Posterior vena cava (tissue), 2 donors: ENCODE measurements at regions of chr1 and their contacts with region 1.

Region 1: DNA sequence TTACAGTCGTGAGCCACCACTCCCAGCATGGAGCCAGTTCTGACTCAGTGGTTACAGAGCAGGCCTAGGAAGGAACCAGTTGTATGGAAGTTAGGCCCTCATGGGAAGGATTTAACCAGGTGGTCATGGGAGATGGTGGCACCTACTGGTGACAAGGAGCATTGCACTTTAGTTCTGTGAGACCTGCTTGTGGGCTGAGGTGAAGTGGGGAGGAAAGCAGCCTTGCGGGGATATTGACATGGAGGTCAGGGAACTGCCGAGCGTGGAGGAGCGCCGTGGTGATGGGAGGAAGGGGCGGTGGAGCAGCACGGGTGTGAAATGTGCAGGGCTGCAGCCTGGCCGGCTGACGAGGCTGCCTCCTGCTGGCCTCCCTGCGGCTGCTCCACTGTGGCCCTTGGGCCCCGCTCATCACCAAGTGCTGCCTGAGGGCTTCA is 100.4 kb downstream of the GALNT2 start:
- DNase-seq: no peak

Region 2: DNA sequence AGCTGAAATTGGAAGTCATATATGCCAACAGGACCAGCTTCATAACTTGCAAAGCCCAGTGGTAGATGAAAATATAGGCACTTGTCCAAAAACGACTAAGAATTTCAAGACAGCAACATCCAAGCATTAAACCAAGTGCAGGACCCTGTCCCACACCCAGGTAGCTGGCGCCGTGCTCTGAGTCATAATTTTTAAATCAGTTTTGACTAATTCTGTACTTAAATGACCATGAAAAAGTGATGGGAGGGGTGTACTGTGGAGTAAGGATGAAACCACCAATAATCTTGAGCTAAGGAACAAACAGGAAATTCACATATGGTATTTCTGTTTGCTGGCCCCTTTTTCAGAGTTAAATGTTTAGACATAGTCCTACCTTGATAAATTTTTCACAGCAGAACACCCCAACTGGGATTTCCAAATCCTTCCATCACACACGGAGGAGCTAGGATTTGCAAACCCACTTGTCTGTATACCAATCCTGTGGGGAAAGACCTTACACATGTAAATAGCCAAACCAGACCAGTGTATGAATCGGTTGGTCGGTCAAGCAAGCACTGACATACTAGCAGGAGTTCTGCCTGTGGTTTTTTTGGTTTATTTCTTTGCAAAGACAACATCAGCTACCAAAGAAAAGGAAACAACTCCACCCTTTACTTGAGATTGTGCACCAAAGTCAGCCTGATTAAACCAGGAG is 1132.2 kb before region 1 on chr1:
- intact Hi-C with region 1: loop called in 1 of 2 experiments (anchors 5 kb)
- DNase-seq: no peak

Region 3: DNA sequence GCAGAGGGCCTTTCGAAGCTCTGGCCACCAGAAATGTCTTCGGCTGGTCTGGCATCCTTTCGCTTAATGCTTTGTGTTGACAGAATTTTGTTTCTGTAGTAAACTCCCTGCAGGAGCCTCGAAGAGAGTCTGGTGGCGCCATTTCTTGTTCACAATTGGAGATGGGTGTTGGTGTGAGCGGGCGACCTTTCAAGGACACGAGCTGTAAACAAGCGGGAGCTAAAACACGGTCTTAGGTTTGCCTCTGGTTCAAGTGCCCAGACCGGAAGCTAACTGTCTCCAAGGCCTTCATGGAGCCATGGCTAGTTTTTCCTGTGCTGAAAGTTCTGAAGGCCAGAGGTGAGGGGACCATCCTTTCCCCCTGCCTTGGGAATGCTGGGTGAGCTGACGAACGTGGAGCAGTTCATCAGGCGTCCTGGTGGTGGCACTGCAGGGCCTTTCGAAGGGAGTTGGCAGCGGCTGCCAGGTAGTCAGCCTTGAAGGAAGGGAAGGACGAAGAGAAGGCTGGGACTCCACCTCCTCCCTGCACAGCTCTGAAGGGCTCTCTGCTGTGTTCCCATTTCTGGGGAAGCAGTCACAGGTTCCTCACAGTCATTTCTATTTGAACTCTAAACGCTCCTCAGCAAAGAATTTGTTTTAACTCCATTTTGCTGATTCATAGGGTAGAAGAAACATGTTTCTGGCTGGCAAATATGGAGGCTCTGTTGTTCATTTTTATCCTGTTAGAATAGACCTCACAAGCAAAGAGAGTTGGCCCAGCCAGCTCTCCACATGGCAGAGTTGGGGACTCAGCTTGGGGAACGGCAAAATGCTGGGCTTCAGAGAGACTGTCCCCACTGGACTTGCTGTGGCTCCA is 506.2 kb before region 1 on chr1:
- intact Hi-C with region 1: no loop called
- DNase-seq: peak; percentile 93

Region 4: GRCh38 chr1:229940684-229941083 is 226.8 kb before region 1 on chr1:
- intact Hi-C with region 1: no loop called
- DNase-seq: no peak

Region 5: GRCh38 chr1:230104395-230105244 is 62.8 kb before region 1 on chr1:
- intact Hi-C with region 1: loop called in 1 of 2 experiments (anchors 10 kb)
- DNase-seq: peak; percentile 99